ENCODE measurements at regions of chr12 and their contacts with region 1.

Region 1: GRCh38 chr12:89524541-89525285 is at the start of gene GALNT4:
- DNase-seq: peak; percentile 61 to 94
- H3K4me3 ChIP-seq: peak within 1 kb of the TSS; percentile 74 to 77
- H3K27ac ChIP-seq: peak within 1 kb of the TSS; percentile 92 to 93
- H3K4me1 ChIP-seq: peaks cover 2 to 20% of the 10 kb centered on the region in 2 donors
- H3K27me3 ChIP-seq: no peaks in the 10 kb centered on the region
- CTCF ChIP-seq: peak; percentile 61 to 78 (median 74)
- total RNA-seq, gene GALNT4: 3.3 TPM

Region 2: GRCh38 chr12:88141770-88142609 is 1382.7 kb before region 1 on chr12 and contains the starts of genes CEP290 and TMTC3:
- intact Hi-C with region 1: loop called (anchors 5 kb)
- DNase-seq: peak; percentile 97 to 99
- H3K4me3 ChIP-seq: peak within 1 kb of the TSS; percentile 77 to 83
- H3K27ac ChIP-seq: peak within 1 kb of the TSS; percentile 64 to 78
- H3K4me1 ChIP-seq: peaks cover 0 to 6% of the 10 kb centered on the region in 2 donors
- H3K27me3 ChIP-seq: no peaks in the 10 kb centered on the region
- CTCF ChIP-seq: no peak
- total RNA-seq, gene CEP290: 7.2 TPM
- total RNA-seq, gene TMTC3: 14.5 TPM

Region 3: DNA sequence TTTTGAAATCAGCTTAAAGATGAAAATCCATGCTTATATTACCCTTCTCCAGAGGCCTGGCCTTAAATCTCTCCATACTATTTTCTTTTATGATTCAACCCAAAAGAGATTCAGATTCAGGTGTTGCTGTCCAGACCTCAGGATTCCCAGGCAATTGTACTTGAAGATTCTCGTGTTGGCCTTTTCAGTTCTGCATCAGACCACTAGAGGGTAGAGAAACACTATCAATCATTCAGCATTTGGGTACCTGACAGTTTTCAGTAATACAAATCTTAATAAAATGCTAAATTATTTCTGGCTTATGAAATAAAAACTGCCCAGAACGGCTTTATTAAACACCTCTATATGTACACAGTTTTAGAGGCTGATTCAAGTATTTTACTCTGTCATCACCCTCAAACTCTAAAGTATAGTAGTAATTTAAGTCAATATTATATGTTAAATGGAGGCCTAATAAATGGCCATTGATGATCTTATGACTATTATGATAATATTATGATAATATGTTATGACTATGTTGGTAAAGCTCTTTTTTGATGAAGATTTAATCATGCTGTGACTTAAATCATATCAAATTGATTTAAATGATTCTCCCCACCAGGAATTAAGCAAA is 473.5 kb before region 1 on chr12:
- intact Hi-C with region 1: loop called (anchors 2 kb)
- DNase-seq: no peak
- H3K4me3 ChIP-seq: no peak overlapping the region
- H3K27ac ChIP-seq: no peak overlapping the region
- H3K4me1 ChIP-seq: no peaks in the 10 kb centered on the region
- H3K27me3 ChIP-seq: no peaks in the 10 kb centered on the region
- CTCF ChIP-seq: peak; percentile 83 to 89 (median 87)

Region 4: DNA sequence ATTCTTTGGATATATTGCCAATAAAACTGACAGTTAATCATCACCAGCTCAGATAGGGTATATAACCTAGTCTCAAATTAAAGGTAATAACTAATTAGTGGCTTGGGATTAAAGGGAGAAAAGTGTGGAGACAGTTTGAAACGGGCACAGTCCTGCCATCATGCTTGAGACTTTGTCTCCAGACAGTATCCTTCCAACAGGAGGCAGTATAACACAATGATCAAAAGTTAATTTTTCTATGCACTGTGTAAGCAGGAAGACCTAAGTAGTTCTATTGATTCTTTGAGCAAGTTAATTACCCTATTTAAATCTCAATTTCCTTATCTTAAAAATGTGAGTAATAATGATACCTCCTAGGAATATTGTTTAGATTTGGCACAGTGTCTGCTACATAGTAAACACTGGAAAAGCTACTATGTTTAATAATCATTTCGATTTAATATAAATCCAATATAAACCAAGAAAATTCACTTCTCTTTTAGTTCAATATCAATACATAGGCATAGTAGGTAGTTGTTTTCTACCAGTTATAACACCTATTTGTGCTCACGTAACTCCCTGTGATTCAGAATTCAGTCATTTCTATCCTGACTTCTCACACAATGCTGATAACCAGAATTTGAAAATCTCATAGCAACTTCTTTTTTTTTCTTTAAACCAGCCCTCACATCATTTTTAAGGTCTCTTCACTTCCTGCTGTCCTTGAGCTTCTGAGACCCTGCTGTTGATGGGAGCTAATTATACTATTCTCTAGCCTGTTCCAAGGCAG is 53.8 kb before region 1 on chr12:
- intact Hi-C with region 1: loop called (anchors 1 kb)
- DNase-seq: no peak
- H3K4me3 ChIP-seq: no peak overlapping the region
- H3K27ac ChIP-seq: no peak overlapping the region
- H3K4me1 ChIP-seq: no peaks in the 10 kb centered on the region
- H3K27me3 ChIP-seq: no peaks in the 10 kb centered on the region
- CTCF ChIP-seq: peak; percentile 28 to 66 (median 44)

Region 5: DNA sequence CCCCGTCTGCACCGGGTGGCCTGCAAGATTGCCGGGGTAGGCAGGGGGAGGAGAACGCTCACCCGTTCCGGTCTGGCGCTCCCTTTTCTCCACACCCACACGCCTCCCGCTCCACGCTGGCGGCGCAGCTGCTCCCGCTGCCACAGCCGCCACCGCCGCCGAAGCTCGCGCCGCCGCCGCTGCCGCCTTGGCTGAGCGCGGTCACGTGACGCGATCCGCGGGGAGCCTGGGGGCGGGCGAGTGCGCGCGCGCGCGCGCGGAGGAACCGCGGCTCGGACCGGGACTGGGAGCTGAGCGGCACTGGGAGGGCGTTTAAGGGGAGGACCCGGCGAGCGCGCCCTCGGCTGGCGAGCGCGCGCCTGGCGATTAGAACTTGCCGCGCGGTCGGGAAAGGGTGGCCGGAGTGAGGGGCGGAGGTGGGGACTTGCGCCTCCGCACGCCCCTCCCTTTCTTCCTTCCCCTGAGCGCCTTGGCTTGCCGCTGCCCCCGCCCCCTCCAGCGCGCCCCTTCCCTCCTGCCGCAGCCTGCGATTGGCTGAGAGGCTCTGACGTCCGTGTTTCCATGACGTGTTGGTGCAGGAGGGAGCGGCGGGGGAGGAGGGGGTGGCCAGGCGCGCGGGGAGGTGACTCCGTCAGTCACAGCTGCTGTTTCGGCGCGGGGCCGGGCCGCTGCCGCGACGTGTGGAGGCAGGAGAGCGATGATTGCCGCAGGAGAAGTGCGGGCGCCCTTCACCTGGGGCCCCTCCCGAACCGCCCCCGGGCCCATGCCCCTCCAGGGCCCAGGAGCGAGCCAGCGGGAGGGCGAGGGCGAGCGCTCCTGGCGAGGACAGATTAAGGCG is 184.7 kb after region 1 on chr12:
- intact Hi-C with region 1: loop called (anchors 2 kb)
- DNase-seq: peak; percentile 91 to 99
- H3K4me3 ChIP-seq: peak overlapping the region; percentile 81 to 91
- H3K27ac ChIP-seq: peak overlapping the region; percentile 98
- H3K4me1 ChIP-seq: peaks cover 0 to 5% of the 10 kb centered on the region in 2 donors
- H3K27me3 ChIP-seq: no peaks in the 10 kb centered on the region
- CTCF ChIP-seq: peak in 1 of 3 experiments; percentile 12

Region 6: GRCh38 chr12:90193500-90193899 is 668.8 kb after region 1 on chr12:
- intact Hi-C with region 1: no loop called
- DNase-seq: no peak
- H3K4me3 ChIP-seq: no peak overlapping the region
- H3K27ac ChIP-seq: no peak overlapping the region
- H3K4me1 ChIP-seq: no peaks in the 10 kb centered on the region
- H3K27me3 ChIP-seq: no peaks in the 10 kb centered on the region
- CTCF ChIP-seq: no peak